CD8-positive, alpha-beta T cell (primary cell): ENCODE measurements at regions of chr6 and their contacts with region 1.

Region 1: DNA sequence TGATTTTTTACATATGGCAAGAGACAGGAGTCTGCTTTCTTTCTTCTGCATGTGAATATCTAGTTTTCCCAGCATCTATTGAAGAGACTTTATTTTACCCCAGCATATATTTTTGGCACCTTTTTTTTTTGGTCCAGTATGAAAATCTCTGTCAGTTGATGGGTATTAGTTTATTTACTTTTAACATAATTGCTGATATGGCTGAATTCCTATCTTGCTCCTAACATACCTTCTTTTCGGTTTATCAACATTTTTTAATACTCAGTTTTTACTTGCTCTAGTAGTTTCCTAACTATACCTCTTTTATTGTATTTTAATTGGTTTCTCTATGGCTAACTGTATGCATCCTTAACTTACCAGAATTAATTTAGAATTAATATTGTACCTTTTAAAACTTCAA is 77.5 kb upstream of the PDE7B start:
- DNase-seq: no peak
- ATAC-seq: no peak
- H3K4me3 ChIP-seq: no peak overlapping the region
- H3K4me3 Mint-ChIP-seq: no peak overlapping the region
- H3K27ac ChIP-seq: no peak overlapping the region
- H3K27ac Mint-ChIP-seq: no peak overlapping the region
- H3K4me1 ChIP-seq: no peaks in the 10 kb centered on the region
- H3K4me1 Mint-ChIP-seq: no peaks in the 10 kb centered on the region
- H3K27me3 ChIP-seq: no peaks in the 10 kb centered on the region
- H3K27me3 Mint-ChIP-seq: peaks cover 2% of the 10 kb centered on the region
- CTCF ChIP-seq: no peak

Region 2: DNA sequence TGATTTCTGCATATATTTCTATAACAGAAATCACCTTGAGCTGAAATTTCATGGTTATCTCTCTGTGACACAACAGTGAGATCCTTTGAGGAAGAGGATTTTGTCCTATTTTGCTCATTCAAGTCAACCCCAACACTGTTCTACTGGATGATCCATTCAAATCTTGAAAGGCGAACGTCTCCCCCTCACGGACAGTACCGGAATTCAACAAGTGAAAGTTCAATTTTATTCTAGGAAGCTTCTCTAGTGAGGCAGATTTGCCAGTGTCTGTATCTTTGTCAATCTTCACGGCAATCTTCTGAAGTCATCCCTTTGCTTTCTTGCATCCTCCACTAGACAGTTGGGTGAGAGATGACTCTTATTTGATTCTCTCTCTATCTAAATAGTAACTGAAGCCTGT is 14.2 kb before region 1 on chr6:
- CTCF ChIA-PET with region 1: no interaction called
- POLR2A ChIA-PET with region 1: no interaction called
- intact Hi-C with region 1: no loop called
- DNase-seq: no peak
- ATAC-seq: no peak
- H3K4me3 ChIP-seq: no peak overlapping the region
- H3K4me3 Mint-ChIP-seq: no peak overlapping the region
- H3K27ac ChIP-seq: no peak overlapping the region
- H3K27ac Mint-ChIP-seq: no peak overlapping the region
- H3K4me1 ChIP-seq: no peaks in the 10 kb centered on the region
- H3K4me1 Mint-ChIP-seq: no peaks in the 10 kb centered on the region
- H3K27me3 ChIP-seq: no peaks in the 10 kb centered on the region
- H3K27me3 Mint-ChIP-seq: no peaks in the 10 kb centered on the region
- CTCF ChIP-seq: no peak

Region 3: DNA sequence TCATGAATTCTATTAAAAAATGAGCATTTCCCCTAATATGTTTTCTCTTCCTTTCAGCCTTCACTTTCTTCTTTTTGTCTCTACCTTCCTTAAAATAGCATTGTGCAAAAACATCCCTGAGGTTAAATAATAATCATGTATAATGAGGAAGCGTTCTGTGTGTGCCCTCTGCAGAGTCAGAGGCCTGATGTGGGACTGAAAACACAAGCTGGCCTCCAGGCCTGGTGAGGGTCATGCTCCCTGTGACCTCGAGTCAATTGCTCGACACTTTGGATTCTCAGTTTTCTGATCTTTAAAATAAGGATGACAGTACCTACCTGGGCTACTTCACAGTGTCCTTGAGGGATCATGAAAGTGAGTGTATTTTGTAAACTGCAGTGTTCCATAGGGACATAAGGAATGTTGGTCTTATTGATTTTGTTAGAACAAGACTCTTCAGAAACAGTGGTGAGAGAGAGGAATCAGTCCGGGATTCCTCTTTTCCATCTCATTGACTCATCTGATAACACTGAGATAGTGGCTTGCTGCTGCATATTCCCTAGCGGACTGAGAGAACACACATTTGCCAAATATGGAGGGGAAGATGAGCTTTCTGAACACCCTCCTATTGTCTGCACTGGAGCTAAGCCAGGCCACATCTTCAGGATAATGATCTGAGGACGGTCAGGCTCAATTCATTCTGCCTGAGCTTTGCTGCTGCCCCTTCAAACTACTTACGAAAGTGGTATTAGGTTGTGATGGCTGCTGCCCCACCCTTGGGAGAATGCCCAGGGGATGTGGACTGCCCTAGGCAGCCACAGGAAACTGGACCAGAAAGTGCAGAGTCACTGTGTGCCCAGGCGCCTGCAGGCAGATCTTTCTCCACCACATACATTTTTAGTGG is 37.9 kb after region 1 on chr6:
- CTCF ChIA-PET with region 1: no interaction called
- POLR2A ChIA-PET with region 1: no interaction called
- intact Hi-C with region 1: loop called in 1 of 2 experiments (anchors 2 kb)
- DNase-seq: no peak
- ATAC-seq: no peak
- H3K4me3 ChIP-seq: no peak overlapping the region
- H3K4me3 Mint-ChIP-seq: no peak overlapping the region
- H3K27ac ChIP-seq: no peak overlapping the region
- H3K27ac Mint-ChIP-seq: no peak overlapping the region
- H3K4me1 ChIP-seq: no peaks in the 10 kb centered on the region
- H3K4me1 Mint-ChIP-seq: no peaks in the 10 kb centered on the region
- H3K27me3 ChIP-seq: no peaks in the 10 kb centered on the region
- H3K27me3 Mint-ChIP-seq: no peaks in the 10 kb centered on the region
- CTCF ChIP-seq: no peak